OCI-LY7 (cell line): ENCODE measurements at regions of chr5 and their contacts with region 1.

Region 1: GRCh38 chr5:59826996-59827395 is 66.5 kb downstream of the PDE4D start:
- DNase-seq: no peak
- H3K4me3 ChIP-seq: no peak overlapping the region
- H3K27ac ChIP-seq: no peak overlapping the region
- H3K4me1 ChIP-seq: no peaks in the 10 kb centered on the region
- CTCF ChIP-seq: no peak

Region 2: DNA sequence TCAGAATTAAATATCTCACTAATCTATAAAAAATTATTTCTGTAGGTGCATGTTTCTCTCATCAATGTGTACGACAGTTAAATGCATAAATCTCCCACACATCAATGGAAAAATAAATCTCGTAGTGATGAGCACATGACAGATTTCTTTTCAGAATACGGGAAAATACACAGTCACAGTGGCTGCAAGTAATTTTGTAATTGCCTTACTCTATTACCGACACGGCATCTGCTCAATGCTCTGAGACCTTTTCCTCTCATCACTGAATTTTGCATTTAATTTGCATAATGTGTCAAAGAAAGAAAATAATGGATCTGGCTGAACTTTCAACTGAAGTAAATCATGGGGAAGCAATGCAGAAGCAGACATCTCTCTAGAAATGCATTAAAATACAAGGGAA is 29.4 kb after region 1 on chr5:
- CTCF ChIA-PET with region 1: no interaction called
- POLR2A ChIA-PET with region 1: no interaction called
- intact Hi-C with region 1: loop called (anchors 1 kb)
- DNase-seq: no peak
- H3K4me3 ChIP-seq: no peak overlapping the region
- H3K27ac ChIP-seq: no peak overlapping the region
- H3K4me1 ChIP-seq: no peaks in the 10 kb centered on the region
- CTCF ChIP-seq: no peak

Region 3: DNA sequence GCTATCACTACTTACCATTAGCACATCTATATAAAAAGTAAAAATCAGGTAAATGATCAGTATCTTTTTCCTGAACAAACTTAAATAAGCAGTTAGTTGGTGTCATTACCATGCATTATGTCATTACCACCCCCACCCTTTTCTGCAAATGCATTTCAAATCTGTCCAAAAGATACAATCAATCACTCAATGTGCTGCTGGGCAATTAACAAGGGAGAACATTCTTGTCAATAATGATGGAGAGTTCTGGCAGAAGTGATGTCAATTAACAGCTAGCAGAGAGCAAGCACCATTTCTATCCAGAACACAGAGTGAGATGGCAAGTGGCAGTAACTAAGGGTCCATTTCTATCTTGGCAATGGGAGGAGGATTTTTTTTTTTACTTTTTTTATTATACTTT is 70.1 kb after region 1 on chr5:
- CTCF ChIA-PET with region 1: no interaction called
- POLR2A ChIA-PET with region 1: no interaction called
- intact Hi-C with region 1: no loop called
- DNase-seq: no peak
- H3K4me3 ChIP-seq: no peak overlapping the region
- H3K27ac ChIP-seq: no peak overlapping the region
- H3K4me1 ChIP-seq: no peaks in the 10 kb centered on the region
- CTCF ChIP-seq: no peak